HepG2 (cell line): ENCODE measurements at regions of chr21 and their contacts with region 1.

Region 1: GRCh38 chr21:40466893-40467501 is 380.0 kb downstream of the DSCAM start:
- DNase-seq: no peak
- ATAC-seq: no peak
- H3K4me3 ChIP-seq: no peak overlapping the region
- H3K27ac ChIP-seq: no peak overlapping the region
- H3K4me1 ChIP-seq: no peaks in the 10 kb centered on the region
- H3K27me3 ChIP-seq: no peaks in the 10 kb centered on the region
- CTCF ChIP-seq: no peak
- EP300 ChIP-seq: no peak
- POLR2A ChIP-seq: no peak
- RAD21 ChIP-seq: no peak

Region 2: GRCh38 chr21:40507999-40508398 is 41.0 kb after region 1 on chr21:
- CTCF ChIA-PET with region 1: no interaction called
- POLR2A ChIA-PET with region 1: no interaction called
- in situ Hi-C with region 1: no loop called
- intact Hi-C with region 1: no loop called
- DNase-seq: peak; percentile 55
- ATAC-seq: peak; percentile 99
- H3K4me3 ChIP-seq: no peak overlapping the region; a peak in 1 of 6 replicates
- H3K27ac ChIP-seq: no peak overlapping the region
- H3K4me1 ChIP-seq: no peaks in the 10 kb centered on the region
- H3K27me3 ChIP-seq: no peaks in the 10 kb centered on the region
- CTCF ChIP-seq: no peak
- EP300 ChIP-seq: no peak; a peak in 1 of 4 replicates
- POLR2A ChIP-seq: no peak
- RAD21 ChIP-seq: no peak

Region 3: DNA sequence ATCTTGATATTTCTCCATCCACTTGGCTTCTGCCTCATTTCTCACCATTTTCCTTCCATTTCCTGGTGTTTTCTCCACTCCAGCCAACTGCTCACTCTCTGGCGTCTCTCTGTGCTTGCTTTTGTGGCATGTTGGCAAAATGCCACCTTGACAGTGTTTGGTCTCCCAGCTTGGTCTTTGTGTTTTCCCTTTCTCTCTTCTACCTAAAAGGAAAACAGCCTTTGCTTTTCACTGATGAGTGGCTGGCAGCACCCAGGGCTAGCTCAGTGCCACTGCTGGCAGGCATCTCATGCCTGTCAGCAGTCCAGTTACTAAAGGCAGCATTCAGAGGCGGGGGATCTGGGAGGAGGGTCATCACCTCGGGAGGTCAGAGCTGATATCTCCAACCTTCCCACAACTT is 435.3 kb after region 1 on chr21:
- CTCF ChIA-PET with region 1: no interaction called
- POLR2A ChIA-PET with region 1: no interaction called
- in situ Hi-C with region 1: no loop called
- intact Hi-C with region 1: no loop called
- DNase-seq: no peak
- ATAC-seq: no peak
- H3K4me3 ChIP-seq: no peak overlapping the region
- H3K27ac ChIP-seq: no peak overlapping the region
- H3K4me1 ChIP-seq: no peaks in the 10 kb centered on the region
- H3K27me3 ChIP-seq: no peaks in the 10 kb centered on the region
- CTCF ChIP-seq: no peak
- EP300 ChIP-seq: no peak
- POLR2A ChIP-seq: no peak
- RAD21 ChIP-seq: no peak

Region 4: DNA sequence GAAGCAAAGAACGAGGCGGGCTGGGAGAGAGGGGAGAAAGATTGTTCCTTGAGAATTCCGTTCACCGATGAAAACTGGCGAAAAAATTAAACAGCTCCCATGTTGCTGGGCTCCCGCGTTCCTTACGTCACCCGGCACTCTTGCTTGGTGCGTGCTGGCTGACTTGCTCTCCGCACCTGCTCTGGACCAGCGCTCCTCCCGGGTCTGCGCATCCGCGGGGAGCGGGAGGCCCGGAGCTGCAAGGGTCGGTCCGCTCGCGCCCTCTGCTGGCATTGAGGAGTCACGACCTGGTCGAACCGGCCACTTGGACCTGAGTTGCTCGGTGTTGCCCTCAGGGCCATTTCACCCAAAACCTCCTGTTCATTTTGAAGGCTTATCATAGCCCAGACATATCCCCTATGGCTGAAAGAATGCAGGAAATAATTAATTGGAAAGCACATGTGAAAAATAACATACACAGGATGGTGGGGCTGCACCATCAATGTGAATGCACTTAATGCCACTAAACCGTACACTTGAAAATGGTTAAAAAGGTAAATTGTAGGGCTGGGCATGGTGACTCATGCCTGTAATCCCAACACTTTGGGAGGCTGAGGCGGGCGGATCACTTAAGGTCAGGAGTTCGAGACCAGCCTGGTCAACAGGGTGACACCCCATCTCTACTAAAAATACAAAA is 602.1 kb after region 1 on chr21:
- CTCF ChIA-PET with region 1: no interaction called
- POLR2A ChIA-PET with region 1: no interaction called
- in situ Hi-C with region 1: loop called (anchors 25 kb)
- intact Hi-C with region 1: no loop called
- DNase-seq: peak; percentile 50
- ATAC-seq: peak; percentile 98
- H3K4me3 ChIP-seq: no peak overlapping the region
- H3K27ac ChIP-seq: no peak overlapping the region
- H3K4me1 ChIP-seq: no peaks in the 10 kb centered on the region
- H3K27me3 ChIP-seq: peaks cover 0 to 13% of the 10 kb centered on the region in 2 experiments; a peak in 2 of 5 replicates
- CTCF ChIP-seq: peak; percentile 93
- EP300 ChIP-seq: no peak
- POLR2A ChIP-seq: no peak
- RAD21 ChIP-seq: peak; percentile 65